HepG2 (cell line): ENCODE measurements at regions of chr21 and their contacts with region 1.

Region 1: DNA sequence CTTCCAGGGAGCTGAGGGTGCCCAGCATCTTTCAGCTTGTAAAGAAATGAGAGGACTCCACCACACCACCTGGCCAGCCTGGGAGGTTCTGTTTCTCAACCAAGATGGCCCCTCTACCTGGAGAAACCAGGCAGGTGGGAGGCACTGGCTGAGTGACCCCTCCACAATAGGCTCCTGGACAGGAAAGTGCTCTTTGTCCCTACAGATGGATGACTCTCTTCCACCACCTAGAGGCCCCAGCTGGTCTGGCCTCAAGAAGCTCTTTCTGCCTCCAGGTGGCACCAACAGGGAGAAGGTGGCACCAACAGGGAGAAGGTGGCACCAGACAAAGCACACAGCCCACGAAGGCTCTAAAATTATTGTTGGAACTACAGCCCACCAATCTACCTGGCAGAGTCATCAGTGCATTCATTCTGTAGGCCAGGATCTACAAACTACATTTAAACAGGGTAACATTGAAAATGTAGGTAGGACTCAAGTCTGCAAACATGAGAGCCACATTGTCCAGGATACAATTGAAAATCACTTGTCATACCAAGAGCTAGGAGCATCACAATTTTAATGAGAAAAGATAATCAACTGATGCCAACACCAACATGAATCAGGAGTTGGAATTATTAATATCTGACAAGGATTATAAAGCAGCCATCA is 14.4 kb downstream of the TMPRSS3 start:
- DNase-seq: peak; percentile 69
- ATAC-seq: peak; percentile 71
- H3K4me3 ChIP-seq: no peak overlapping the region
- H3K27ac ChIP-seq: no peak overlapping the region
- H3K4me1 ChIP-seq: peaks cover 33% of the 10 kb centered on the region
- H3K27me3 ChIP-seq: no peaks in the 10 kb centered on the region
- CTCF ChIP-seq: peak; percentile 91
- EP300 ChIP-seq: no peak
- POLR2A ChIP-seq: no peak
- RAD21 ChIP-seq: peak; percentile 75

Region 2: DNA sequence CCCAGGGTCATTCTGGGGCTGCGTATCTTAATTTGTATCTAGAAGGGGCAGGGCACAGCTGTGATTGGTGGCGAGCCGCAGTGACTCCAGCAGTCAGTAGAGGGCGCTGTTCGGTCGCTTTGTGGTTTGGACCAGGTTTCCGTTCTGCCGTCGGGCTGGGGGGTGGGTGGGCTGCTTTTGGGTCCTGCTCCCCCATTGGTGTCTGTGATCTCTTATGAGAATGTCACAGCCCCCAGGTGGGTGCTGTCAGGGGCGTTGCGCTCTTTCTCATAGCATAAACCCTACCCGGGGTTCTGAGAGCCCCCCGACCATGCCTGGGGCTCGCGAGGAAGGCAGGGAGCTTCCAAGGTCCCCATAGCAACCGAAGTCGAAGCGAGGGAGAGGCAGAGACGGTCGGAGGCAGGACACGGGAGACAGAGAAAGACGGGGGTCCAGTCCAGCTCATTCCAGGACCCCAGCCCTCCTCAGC is 71.7 kb before region 1 on chr21:
- CTCF ChIA-PET with region 1: interaction called, 16 read pairs
- POLR2A ChIA-PET with region 1: interaction called, 3 read pairs
- in situ Hi-C with region 1: no loop called
- intact Hi-C with region 1: no loop called
- DNase-seq: no peak
- ATAC-seq: peak; percentile 62
- H3K4me3 ChIP-seq: no peak overlapping the region
- H3K27ac ChIP-seq: no peak overlapping the region
- H3K4me1 ChIP-seq: peaks cover 44% of the 10 kb centered on the region
- H3K27me3 ChIP-seq: peaks cover 1 to 10% of the 10 kb centered on the region in 2 experiments; a peak in 4 of 5 replicates
- CTCF ChIP-seq: peak; percentile 78
- EP300 ChIP-seq: no peak
- POLR2A ChIP-seq: no peak
- RAD21 ChIP-seq: 0 out of 2 replicates have a peak, but pooled peaks have one; percentile 37

Region 3: GRCh38 chr21:42337830-42338728 is 43.4 kb before region 1 on chr21:
- CTCF ChIA-PET with region 1: interaction called, 27 read pairs
- POLR2A ChIA-PET with region 1: no interaction called
- in situ Hi-C with region 1: no loop called
- intact Hi-C with region 1: loop called (anchors 1 kb)
- DNase-seq: peak; percentile 70
- ATAC-seq: peak; percentile 96
- H3K4me3 ChIP-seq: peak overlapping the region in 2 of 3 experiments; percentile 11 to 59; a peak in 2 of 6 replicates
- H3K27ac ChIP-seq: no peak overlapping the region
- H3K4me1 ChIP-seq: peaks cover 21% of the 10 kb centered on the region
- H3K27me3 ChIP-seq: no peaks in the 10 kb centered on the region; a peak in 2 of 5 replicates
- CTCF ChIP-seq: peak; percentile 87
- EP300 ChIP-seq: no peak
- POLR2A ChIP-seq: no peak
- RAD21 ChIP-seq: peak; percentile 60

Region 4: GRCh38 chr21:42349420-42350317 is 31.8 kb before region 1 on chr21:
- CTCF ChIA-PET with region 1: no interaction called
- POLR2A ChIA-PET with region 1: no interaction called
- in situ Hi-C with region 1: no loop called
- intact Hi-C with region 1: no loop called
- DNase-seq: no peak
- ATAC-seq: no peak
- H3K4me3 ChIP-seq: no peak overlapping the region
- H3K27ac ChIP-seq: no peak overlapping the region
- H3K4me1 ChIP-seq: peaks cover 16% of the 10 kb centered on the region
- H3K27me3 ChIP-seq: peaks cover 0 to 16% of the 10 kb centered on the region in 2 experiments; a peak in 1 of 5 replicates
- CTCF ChIP-seq: no peak
- EP300 ChIP-seq: no peak
- POLR2A ChIP-seq: no peak
- RAD21 ChIP-seq: no peak

Region 5: DNA sequence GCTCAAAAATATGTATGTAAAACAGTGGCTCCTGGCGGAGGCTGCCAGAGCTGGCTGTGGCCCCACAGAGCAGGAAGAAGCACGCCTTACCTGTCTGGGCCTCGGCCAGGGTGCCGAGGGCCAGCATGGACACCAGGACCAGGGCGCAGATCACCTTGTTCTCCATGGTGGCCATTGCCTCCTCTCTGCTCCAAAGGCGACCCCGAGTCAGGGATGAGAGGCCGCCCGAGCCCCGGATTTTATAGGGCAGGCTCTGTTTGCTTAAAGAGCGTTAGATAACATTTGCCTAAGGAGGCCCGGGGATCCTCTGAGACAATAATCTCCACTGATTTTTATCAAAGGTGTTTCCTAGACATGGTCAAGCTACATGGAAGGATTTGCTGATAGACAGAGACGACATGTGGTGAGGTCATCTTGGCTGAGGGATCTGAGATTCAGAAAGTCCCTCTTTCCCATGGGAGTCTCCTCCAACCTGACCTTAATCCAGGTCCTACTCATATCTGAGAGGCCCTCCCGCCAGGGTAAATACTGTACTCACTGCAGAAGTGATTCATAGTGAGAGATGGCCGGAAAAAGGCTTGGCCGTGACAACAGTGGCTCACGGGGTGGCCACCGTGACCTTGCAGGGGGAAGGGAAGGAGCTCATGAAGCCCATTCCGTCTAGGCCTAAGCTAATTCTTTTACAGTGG is 15.0 kb before region 1 on chr21 and contains the start of gene TFF1:
- CTCF ChIA-PET with region 1: no interaction called
- POLR2A ChIA-PET with region 1: interaction called, 10 read pairs
- in situ Hi-C with region 1: no loop called
- intact Hi-C with region 1: no loop called
- DNase-seq: peak; percentile 71
- ATAC-seq: peak; percentile 74
- H3K4me3 ChIP-seq: peak within 1 kb of the TSS in 1 of 3 experiments; percentile 8; a peak in 1 of 6 replicates
- H3K27ac ChIP-seq: no peak within 1 kb of the TSS
- H3K4me1 ChIP-seq: peaks cover 40% of the 10 kb centered on the region
- H3K27me3 ChIP-seq: peaks cover 1 to 17% of the 10 kb centered on the region in 2 experiments; a peak in 2 of 5 replicates
- CTCF ChIP-seq: no peak
- EP300 ChIP-seq: peak in 1 of 2 experiments; percentile 39; a peak in 1 of 4 replicates
- POLR2A ChIP-seq: no peak
- RAD21 ChIP-seq: no peak
- total RNA-seq, gene TFF1: 0.24 TPM in 1 of 2 replicates, not detected in the other

Region 6: DNA sequence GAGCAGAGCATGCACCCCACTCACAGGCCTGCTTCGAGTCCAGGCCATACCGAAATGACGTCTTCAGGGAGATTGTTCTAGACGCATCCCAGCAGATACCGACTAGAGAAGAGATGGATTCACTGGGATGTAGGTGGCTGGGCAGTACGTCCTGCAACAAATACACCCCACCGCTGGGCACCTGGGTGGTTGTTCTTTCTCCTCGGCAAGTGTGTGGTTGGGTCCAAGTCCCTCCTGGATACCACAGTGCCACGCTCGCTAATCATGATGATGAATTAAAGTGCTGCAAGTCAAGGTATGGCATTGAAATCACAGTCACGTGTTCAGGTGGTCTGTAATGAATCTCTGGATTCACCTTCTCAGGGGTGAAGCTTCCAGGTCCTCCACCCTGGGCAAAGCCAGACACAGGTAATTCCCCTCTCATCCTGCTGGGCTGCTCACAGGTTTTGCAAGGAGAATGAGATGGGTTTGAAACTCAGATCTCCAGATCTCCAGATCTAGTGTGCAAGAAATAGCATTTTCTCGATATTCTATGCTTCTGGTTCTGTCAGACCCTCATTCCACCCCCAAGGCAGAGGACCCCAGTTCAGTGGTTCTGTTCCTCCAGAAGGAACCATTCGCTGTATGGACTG is 68.0 kb after region 1 on chr21:
- CTCF ChIA-PET with region 1: interaction called, 30 read pairs
- POLR2A ChIA-PET with region 1: no interaction called
- in situ Hi-C with region 1: loop called (anchors 5 kb)
- intact Hi-C with region 1: loop called (anchors 1 kb)
- DNase-seq: no peak
- ATAC-seq: no peak
- H3K4me3 ChIP-seq: no peak overlapping the region
- H3K27ac ChIP-seq: no peak overlapping the region
- H3K4me1 ChIP-seq: peaks cover 4% of the 10 kb centered on the region; the same call in 1 of the 2 replicates
- H3K27me3 ChIP-seq: peaks cover 0 to 9% of the 10 kb centered on the region in 2 experiments; a peak in 2 of 5 replicates
- CTCF ChIP-seq: no peak
- EP300 ChIP-seq: no peak
- POLR2A ChIP-seq: no peak
- RAD21 ChIP-seq: no peak

Region 7: DNA sequence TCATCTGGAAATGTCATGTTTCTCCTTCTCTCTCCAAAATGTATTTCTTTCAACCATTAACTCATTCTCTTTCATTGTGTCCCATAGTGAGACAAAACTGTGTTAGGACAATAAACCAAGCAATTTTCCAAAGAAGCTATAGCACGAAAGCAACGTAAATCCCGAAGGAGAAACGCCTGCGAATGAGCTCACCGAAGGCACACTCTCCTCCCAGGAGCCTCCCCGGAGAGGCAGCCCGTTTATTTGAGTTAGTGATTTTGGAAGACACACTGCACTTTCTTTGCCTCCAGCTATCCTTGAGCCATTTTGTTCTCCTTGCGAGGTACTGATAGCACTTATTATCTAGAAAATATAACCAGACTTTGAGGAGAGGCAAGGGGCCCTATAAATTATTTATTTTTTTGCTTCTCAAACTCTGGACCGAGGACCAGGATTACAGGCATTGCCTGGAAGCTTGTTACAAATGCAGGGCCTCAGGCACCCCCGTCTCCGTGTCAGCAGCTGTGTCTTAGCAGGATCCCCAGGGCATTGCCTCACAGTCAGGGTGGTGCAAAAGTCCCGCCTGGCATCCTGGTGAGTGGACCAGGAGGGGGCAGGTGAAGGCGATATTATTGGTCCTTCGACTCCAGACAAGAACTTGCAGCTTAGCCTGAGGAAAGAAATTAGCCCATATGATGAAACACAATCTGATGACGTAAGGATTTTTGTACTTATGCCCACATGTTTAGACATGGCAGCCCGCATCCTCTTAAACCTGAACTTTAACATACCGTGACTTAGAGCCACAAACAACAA is 73.5 kb after region 1 on chr21:
- CTCF ChIA-PET with region 1: interaction called, 30 read pairs
- POLR2A ChIA-PET with region 1: no interaction called
- in situ Hi-C with region 1: no loop called
- intact Hi-C with region 1: loop called (anchors 1 kb)
- DNase-seq: no peak
- ATAC-seq: no peak
- H3K4me3 ChIP-seq: no peak overlapping the region
- H3K27ac ChIP-seq: no peak overlapping the region
- H3K4me1 ChIP-seq: peaks cover 4% of the 10 kb centered on the region; the same call in 1 of the 2 replicates
- H3K27me3 ChIP-seq: peaks cover 0 to 12% of the 10 kb centered on the region in 2 experiments; a peak in 2 of 5 replicates
- CTCF ChIP-seq: no peak
- EP300 ChIP-seq: no peak
- POLR2A ChIP-seq: no peak
- RAD21 ChIP-seq: no peak

Region 8: GRCh38 chr21:42524349-42525151 is 143.1 kb after region 1 on chr21:
- CTCF ChIA-PET with region 1: no interaction called
- POLR2A ChIA-PET with region 1: no interaction called
- in situ Hi-C with region 1: no loop called
- intact Hi-C with region 1: no loop called
- DNase-seq: peak; percentile 9
- ATAC-seq: no peak
- H3K4me3 ChIP-seq: no peak overlapping the region
- H3K27ac ChIP-seq: no peak overlapping the region
- H3K4me1 ChIP-seq: peaks cover 40% of the 10 kb centered on the region
- H3K27me3 ChIP-seq: 0 out of 5 replicates have a peak, but pooled peaks cover 0 to 4% of the 10 kb centered on the region in 2 experiments
- CTCF ChIP-seq: no peak
- EP300 ChIP-seq: no peak
- POLR2A ChIP-seq: no peak
- RAD21 ChIP-seq: no peak